ENCODE measurements at regions of chr18 and their contacts with region 1.

Region 1: DNA sequence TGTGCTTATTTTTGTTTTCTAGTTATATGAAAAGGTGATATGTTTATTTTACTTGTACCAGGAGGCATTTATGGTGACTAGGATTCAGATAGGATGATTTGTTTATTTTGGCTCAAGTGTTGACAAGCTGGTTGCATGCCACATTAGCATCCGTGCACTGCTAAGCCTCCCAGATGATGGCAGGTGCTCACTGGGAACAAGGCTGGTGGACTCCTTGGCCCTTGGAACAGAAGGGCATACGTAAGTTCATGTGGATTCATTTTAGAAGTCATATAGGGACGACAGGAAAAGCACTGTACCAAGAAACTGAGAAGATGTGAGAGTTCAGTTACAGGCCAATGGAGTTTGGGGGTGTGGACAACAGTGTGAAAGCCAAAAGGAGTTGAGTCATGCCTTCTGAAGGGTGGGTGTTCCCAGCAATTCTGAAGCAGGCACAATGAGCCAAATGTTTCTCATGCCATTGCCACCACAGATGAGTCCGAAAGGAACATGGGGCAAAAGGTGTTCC is 166.2 kb downstream of the PHLPP1 start:
- DNase-seq: peak; percentile 77
- H3K4me3 ChIP-seq: no peak overlapping the region
- H3K27ac ChIP-seq: peak overlapping the region; percentile 38
- H3K4me1 ChIP-seq: peaks cover 59% of the 10 kb centered on the region
- H3K27me3 ChIP-seq: no peaks in the 10 kb centered on the region
- CTCF ChIP-seq: no peak
- POLR2A ChIP-seq: no peak

Region 2: DNA sequence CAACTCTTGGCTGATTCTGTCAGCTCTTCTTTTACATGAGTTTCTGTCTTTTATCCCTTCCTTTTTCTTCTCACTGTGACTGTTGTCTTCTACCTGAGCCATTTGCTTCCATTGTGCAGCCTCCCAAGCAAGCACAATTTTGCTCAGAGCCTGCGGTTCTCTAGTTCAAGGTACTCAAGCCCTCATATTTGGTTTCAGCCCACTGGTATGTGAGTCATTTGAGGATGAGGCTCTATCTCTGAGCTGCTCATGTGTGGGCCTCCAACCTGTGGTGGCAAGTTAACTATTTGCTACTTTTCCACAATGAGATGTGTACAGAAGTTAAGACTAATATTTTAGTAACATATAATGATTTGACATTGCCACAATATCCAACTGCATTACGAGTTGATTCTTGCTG is 16.8 kb after region 1 on chr18:
- CTCF ChIA-PET with region 1: interaction called, 18 read pairs
- POLR2A ChIA-PET with region 1: interaction called, 3 read pairs
- dilution Hi-C with region 1: no loop called
- intact Hi-C with region 1: loop called (anchors 1 kb)
- DNase-seq: no peak
- H3K4me3 ChIP-seq: no peak overlapping the region
- H3K27ac ChIP-seq: peak overlapping the region; percentile 82
- H3K4me1 ChIP-seq: peaks cover 19% of the 10 kb centered on the region
- H3K27me3 ChIP-seq: no peaks in the 10 kb centered on the region
- CTCF ChIP-seq: no peak
- POLR2A ChIP-seq: no peak

Region 3: GRCh38 chr18:62944454-62944853 is 62.9 kb after region 1 on chr18:
- CTCF ChIA-PET with region 1: interaction called, 19 read pairs
- POLR2A ChIA-PET with region 1: no interaction called
- dilution Hi-C with region 1: no loop called
- intact Hi-C with region 1: no loop called
- DNase-seq: peak; percentile 38
- H3K4me3 ChIP-seq: no peak overlapping the region
- H3K27ac ChIP-seq: no peak overlapping the region
- H3K4me1 ChIP-seq: peaks cover 6% of the 10 kb centered on the region
- H3K27me3 ChIP-seq: no peaks in the 10 kb centered on the region
- CTCF ChIP-seq: no peak
- POLR2A ChIP-seq: no peak

Region 4: DNA sequence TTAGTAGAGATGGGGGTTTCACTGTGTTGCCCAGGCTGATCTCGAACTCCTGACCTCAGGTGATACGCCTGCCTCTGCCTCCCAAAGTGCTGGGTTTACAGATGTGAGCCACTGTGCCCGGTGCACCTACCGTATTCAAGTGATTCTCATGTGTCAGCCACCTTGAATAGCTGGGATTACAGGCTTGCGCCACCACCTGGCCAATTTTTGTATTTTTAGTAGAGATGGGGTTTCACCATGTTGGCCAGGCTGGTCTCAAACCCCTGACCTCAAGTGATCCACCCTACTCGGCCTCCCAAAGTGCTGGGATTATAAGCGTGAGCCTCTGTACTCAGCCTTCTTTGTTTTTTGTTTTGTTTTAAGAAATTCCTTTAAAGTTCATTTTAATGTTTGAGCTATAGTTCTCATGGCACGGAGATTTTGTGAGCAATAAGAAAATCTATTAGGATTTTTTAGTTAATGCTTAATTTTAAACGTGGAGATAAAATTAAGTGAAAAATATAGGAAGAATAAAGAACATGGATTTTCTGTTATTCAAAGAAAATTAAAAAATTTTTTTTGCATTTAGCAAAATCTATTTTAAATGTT is 76.4 kb after region 1 on chr18:
- CTCF ChIA-PET with region 1: interaction called, 55 read pairs
- POLR2A ChIA-PET with region 1: no interaction called
- dilution Hi-C with region 1: no loop called
- intact Hi-C with region 1: loop called (anchors 2 kb)
- DNase-seq: peak; percentile 60
- H3K4me3 ChIP-seq: no peak overlapping the region
- H3K27ac ChIP-seq: no peak overlapping the region
- H3K4me1 ChIP-seq: peaks cover 5% of the 10 kb centered on the region
- H3K27me3 ChIP-seq: no peaks in the 10 kb centered on the region
- CTCF ChIP-seq: peak; percentile 31 to 42
- POLR2A ChIP-seq: no peak